CD4-positive, alpha-beta memory T cell (primary cell): ENCODE measurements at regions of chr15 and their contacts with region 1.

Region 1: GRCh38 chr15:99928429-99928981 is 195.3 kb upstream of the LYSMD4 start:
- DNase-seq: peak; percentile 79 to 90 (median 88)
- H3K4me3 ChIP-seq: peak overlapping the region; percentile 74 to 78
- H3K4me3 Mint-ChIP-seq: peak overlapping the region; percentile 88 to 94 (median 90)
- H3K27ac ChIP-seq: peak overlapping the region; percentile 62
- H3K27ac Mint-ChIP-seq: peak overlapping the region; percentile 88 to 97 (median 93)
- H3K4me1 ChIP-seq: peaks cover 18% of the 10 kb centered on the region
- H3K4me1 Mint-ChIP-seq: peaks cover 9 to 27% (median 17%) of the 10 kb centered on the region in 4 donors
- H3K27me3 ChIP-seq: no peaks in the 10 kb centered on the region
- H3K27me3 Mint-ChIP-seq: peaks cover 2 to 4% of the 10 kb centered on the region in 2 donors

Region 2: GRCh38 chr15:99565299-99566156 is 363.0 kb before region 1 on chr15 and contains the start of gene MEF2A:
- CTCF ChIA-PET with region 1: no interaction called
- POLR2A ChIA-PET with region 1: no interaction called
- intact Hi-C with region 1: loop called (anchors 5 kb)
- DNase-seq: peak; percentile 92 to 94 (median 92)
- H3K4me3 ChIP-seq: peak within 1 kb of the TSS; percentile 63 to 99
- H3K4me3 Mint-ChIP-seq: peak within 1 kb of the TSS; percentile 95 to 100 (median 98)
- H3K27ac ChIP-seq: peak within 1 kb of the TSS; percentile 85
- H3K27ac Mint-ChIP-seq: peak within 1 kb of the TSS; percentile 95 to 99 (median 97)
- H3K4me1 ChIP-seq: peaks cover 29% of the 10 kb centered on the region
- H3K4me1 Mint-ChIP-seq: peaks cover 28 to 45% (median 36%) of the 10 kb centered on the region in 4 donors
- H3K27me3 ChIP-seq: no peaks in the 10 kb centered on the region
- H3K27me3 Mint-ChIP-seq: peaks cover 0 to 3% of the 10 kb centered on the region in 2 donors
- total RNA-seq, gene MEF2A: 27.6 to 27.8 TPM

Region 3: DNA sequence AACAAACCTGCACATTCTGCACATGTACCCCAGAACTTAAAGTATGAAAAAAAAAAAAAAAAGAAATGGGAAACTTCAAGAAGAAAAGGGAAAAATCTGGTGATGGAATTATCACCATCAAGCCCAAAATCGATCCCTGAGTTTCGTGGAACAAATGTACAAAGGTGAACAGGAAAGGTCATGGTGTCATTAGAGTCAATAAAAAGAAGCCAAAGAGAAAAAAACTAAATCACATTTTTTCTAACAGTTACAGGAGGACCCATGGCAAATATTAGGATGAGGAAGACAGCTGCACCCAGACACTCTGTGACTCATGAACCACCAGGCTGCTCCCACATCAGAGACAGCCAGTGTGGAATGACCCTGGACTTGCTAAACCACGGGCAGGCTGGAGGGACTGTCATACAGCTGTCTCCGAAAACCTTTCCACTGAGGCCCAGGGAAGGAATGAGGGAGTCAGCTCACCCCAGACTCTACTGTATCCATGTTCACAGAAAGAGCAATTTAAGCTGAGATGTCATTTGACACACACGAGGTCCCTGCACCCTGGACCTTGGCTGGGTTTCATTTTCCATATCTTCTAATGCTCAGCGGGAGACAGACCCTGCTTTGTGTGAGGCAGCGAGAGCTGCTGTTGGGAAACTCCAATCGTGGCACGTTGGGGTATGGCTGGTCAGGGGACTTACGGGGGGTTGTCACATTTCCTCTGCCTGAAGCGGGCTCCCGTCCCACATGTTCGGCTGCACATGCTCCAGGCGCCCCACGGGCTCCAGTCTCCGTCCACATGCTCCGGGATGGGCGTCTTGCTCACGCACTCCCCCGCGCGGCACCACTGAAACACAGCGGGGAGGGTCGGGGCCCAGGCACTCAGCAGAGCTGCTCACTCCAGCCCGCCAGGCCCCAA is 203.1 kb after region 1 on chr15:
- CTCF ChIA-PET with region 1: interaction called, 3 read pairs
- POLR2A ChIA-PET with region 1: interaction called, 4 read pairs
- intact Hi-C with region 1: loop called (anchors 2 kb)
- DNase-seq: no peak
- H3K4me3 ChIP-seq: peak overlapping the region in 1 of 2 donors; percentile 9
- H3K4me3 Mint-ChIP-seq: peak overlapping the region; percentile 13 to 69 (median 43)
- H3K27ac ChIP-seq: no peak overlapping the region
- H3K27ac Mint-ChIP-seq: peak overlapping the region in 1 of 7 donors; percentile 36
- H3K4me1 ChIP-seq: no peaks in the 10 kb centered on the region
- H3K4me1 Mint-ChIP-seq: peaks cover 0 to 1% (median 0%) of the 10 kb centered on the region in 4 donors
- H3K27me3 ChIP-seq: no peaks in the 10 kb centered on the region
- H3K27me3 Mint-ChIP-seq: no peaks in the 10 kb centered on the region

Region 4: GRCh38 chr15:100241572-100242482 is 313.3 kb after region 1 on chr15:
- CTCF ChIA-PET with region 1: no interaction called
- POLR2A ChIA-PET with region 1: no interaction called
- intact Hi-C with region 1: no loop called
- DNase-seq: no peak
- H3K4me3 ChIP-seq: no peak overlapping the region
- H3K4me3 Mint-ChIP-seq: no peak overlapping the region
- H3K27ac ChIP-seq: no peak overlapping the region
- H3K27ac Mint-ChIP-seq: no peak overlapping the region
- H3K4me1 ChIP-seq: no peaks in the 10 kb centered on the region
- H3K4me1 Mint-ChIP-seq: no peaks in the 10 kb centered on the region
- H3K27me3 ChIP-seq: no peaks in the 10 kb centered on the region
- H3K27me3 Mint-ChIP-seq: no peaks in the 10 kb centered on the region

Region 5: DNA sequence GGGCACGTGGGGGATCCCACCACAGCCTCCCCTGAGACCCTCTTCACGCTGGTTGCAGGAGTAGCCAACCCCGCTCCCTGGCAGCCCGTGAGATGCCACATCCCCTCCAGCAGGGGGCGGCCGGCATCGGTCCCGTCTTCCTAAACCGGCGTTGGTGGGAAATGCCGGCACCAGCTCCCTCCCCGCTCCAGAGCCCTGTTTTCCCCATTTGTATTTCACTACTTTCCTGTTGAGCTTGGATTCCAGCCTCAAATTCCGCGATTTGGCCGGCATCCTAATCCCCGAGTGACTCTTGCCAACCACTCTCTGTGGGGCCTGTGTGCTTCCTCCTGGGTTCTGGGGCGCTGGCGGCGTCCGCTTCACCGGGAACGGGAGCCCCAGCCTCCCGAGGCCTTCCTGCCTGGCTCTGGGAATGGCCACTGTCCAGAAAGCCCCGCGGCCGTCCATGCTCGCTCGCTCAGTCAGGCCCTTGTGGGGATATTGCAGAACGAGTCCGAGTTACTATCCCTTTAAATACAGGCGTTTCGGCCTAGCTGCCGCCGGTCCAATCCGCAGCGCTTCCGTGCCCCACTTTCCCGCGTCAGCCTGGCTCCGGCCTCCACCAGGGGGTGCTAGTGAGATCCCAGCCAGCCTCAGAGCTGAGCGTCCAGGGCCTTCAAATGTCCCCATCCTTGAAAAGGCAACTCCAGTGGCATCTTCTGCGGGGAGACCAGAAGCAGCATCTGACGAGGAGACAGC is 421.4 kb after region 1 on chr15:
- CTCF ChIA-PET with region 1: interaction called, 56 read pairs
- POLR2A ChIA-PET with region 1: interaction called, 14 read pairs
- intact Hi-C with region 1: no loop called
- DNase-seq: peak; percentile 82 to 87 (median 83)
- H3K4me3 ChIP-seq: peak overlapping the region; percentile 70 to 98
- H3K4me3 Mint-ChIP-seq: peak overlapping the region; percentile 95 to 97 (median 96)
- H3K27ac ChIP-seq: peak overlapping the region; percentile 85
- H3K27ac Mint-ChIP-seq: peak overlapping the region; percentile 81 to 98 (median 93)
- H3K4me1 ChIP-seq: peaks cover 5% of the 10 kb centered on the region
- H3K4me1 Mint-ChIP-seq: peaks cover 6 to 18% (median 10%) of the 10 kb centered on the region in 4 donors
- H3K27me3 ChIP-seq: peaks cover 7% of the 10 kb centered on the region
- H3K27me3 Mint-ChIP-seq: peaks cover 13 to 24% of the 10 kb centered on the region in 2 donors

Region 6: GRCh38 chr15:100596792-100597191 is 668.3 kb after region 1 on chr15:
- CTCF ChIA-PET with region 1: interaction called, 4 read pairs
- POLR2A ChIA-PET with region 1: interaction called, 13 read pairs
- intact Hi-C with region 1: loop called (anchors 2 kb)
- DNase-seq: peak; percentile 88 to 95 (median 92)
- H3K4me3 ChIP-seq: peak overlapping the region; percentile 48 to 59
- H3K4me3 Mint-ChIP-seq: peak overlapping the region; percentile 75 to 91 (median 86)
- H3K27ac ChIP-seq: peak overlapping the region; percentile 77
- H3K27ac Mint-ChIP-seq: peak overlapping the region in 6 of 7 donors; percentile 90 to 98 (median 96)
- H3K4me1 ChIP-seq: peaks cover 87% of the 10 kb centered on the region
- H3K4me1 Mint-ChIP-seq: peaks cover 52 to 71% (median 58%) of the 10 kb centered on the region in 4 donors
- H3K27me3 ChIP-seq: no peaks in the 10 kb centered on the region
- H3K27me3 Mint-ChIP-seq: no peaks in the 10 kb centered on the region

Region 7: DNA sequence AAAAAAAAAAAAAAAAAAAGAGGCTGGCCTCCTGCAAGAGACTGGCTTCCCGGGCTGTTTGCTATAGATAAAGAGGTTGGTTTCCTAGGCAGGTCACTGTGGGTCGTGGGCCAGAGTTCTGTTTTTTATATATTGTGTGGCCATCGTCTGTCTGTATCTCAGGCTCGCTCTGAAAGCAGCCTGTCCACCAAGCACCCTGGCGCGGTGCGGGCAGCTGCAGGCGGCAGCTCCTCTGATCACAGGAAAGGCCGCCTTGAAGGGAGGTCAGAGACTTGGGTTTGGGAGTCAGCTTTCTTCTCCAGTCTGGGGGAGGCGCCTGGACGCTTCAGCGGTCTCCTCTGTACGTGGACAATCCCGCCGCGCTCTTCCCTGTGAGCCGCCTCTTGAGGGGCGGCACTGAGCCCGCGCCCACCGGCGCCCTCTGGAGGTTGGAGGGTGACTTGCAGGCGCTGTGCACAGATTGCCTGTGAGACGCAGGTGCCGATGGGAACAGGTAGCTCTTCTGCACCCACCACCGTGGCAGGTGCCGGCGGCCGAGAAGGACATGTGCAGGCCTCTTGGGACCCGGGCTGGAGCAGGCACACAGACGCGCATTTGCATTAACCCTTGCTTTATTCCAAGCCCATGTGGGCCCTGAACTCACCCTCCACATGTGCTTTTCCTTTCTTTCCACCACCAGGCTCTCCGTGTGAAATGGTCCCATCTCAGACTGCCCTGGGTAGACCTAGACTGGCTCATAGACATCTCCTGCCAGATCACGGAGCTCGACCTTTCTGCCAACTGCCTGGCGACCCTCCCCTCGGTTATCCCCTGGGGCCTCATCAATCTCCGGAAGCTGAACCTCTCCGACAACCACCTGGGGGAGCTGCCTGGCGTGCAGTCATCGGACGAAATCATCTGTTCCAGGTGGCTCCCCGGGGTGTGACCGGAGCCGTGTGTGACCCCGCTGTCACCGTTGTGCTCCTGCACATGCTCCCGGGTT is 1079.9 kb after region 1 on chr15:
- CTCF ChIA-PET with region 1: interaction called, 6 read pairs
- POLR2A ChIA-PET with region 1: interaction called, 4 read pairs
- intact Hi-C with region 1: loop called (anchors 2 kb)
- DNase-seq: peak; percentile 79 to 85 (median 81)
- H3K4me3 ChIP-seq: peak overlapping the region; percentile 53 to 70
- H3K4me3 Mint-ChIP-seq: peak overlapping the region; percentile 89 to 95 (median 91)
- H3K27ac ChIP-seq: no peak overlapping the region
- H3K27ac Mint-ChIP-seq: peak overlapping the region; percentile 22 to 80 (median 44)
- H3K4me1 ChIP-seq: peaks cover 14% of the 10 kb centered on the region
- H3K4me1 Mint-ChIP-seq: peaks cover 8 to 28% (median 16%) of the 10 kb centered on the region in 4 donors
- H3K27me3 ChIP-seq: no peaks in the 10 kb centered on the region
- H3K27me3 Mint-ChIP-seq: peaks cover 6 to 8% of the 10 kb centered on the region in 2 donors